ENCODE measurements at regions of chr10 and their contacts with region 1.

Region 1: DNA sequence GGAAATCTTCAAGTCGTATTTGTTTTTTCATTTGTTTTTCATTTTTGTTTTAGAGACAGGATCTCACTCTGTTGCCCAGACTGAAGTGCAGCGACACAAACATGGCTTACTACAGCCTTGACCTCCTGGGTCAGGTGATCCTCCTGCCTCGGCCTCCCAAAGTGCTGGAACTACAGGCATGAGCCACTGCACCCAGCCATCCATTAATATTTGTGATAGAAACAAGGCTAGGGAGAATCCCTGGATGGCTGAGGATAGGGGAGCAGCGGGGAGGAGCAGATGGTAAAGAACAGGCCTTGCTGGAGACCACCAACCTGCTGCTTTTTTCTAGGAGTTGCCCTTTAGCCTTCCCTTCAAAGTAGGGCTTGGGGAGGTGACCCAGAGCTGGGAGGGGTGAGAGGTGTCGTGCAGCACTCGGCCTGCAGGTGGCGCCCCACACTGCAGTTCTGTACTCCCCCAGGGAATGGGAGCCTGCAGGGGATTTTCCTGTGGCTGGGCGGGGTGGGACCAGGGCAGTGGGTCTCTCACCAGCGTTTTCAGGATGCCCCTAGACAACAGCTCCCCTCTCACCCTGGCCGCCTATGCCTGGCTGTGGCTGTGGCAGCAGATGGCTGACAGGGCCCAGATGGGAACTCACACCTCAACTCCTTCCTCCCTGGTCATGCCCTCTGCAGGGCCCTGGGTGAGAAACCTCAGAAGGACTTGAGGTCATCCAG is 12.6 kb upstream of the CDH23 start:
- DNase-seq: peak; percentile 58
- ATAC-seq: peak; percentile 80
- H3K4me3 ChIP-seq: no peak overlapping the region
- H3K27ac ChIP-seq: no peak overlapping the region
- H3K4me1 ChIP-seq: no peaks in the 10 kb centered on the region
- H3K27me3 ChIP-seq: peaks cover 11% of the 10 kb centered on the region; the same call in 1 of the 2 replicates
- CTCF ChIP-seq: peak; percentile 79

Region 2: GRCh38 chr10:71333129-71333887 is 50.8 kb before region 1 on chr10:
- CTCF ChIA-PET with region 1: no interaction called
- POLR2A ChIA-PET with region 1: no interaction called
- intact Hi-C with region 1: no loop called
- DNase-seq: no peak
- ATAC-seq: no peak
- H3K4me3 ChIP-seq: no peak overlapping the region
- H3K27ac ChIP-seq: no peak overlapping the region
- H3K4me1 ChIP-seq: no peaks in the 10 kb centered on the region
- H3K27me3 ChIP-seq: no peaks in the 10 kb centered on the region
- CTCF ChIP-seq: no peak

Region 3: GRCh38 chr10:71569775-71570588 is 185.9 kb after region 1 on chr10:
- CTCF ChIA-PET with region 1: no interaction called
- POLR2A ChIA-PET with region 1: no interaction called
- intact Hi-C with region 1: loop called (anchors 10 kb)
- DNase-seq: peak; percentile 69
- ATAC-seq: 0 out of 2 replicates have a peak, but pooled peaks have one; percentile 53
- H3K4me3 ChIP-seq: no peak overlapping the region
- H3K27ac ChIP-seq: no peak overlapping the region
- H3K4me1 ChIP-seq: no peaks in the 10 kb centered on the region
- H3K27me3 ChIP-seq: no peaks in the 10 kb centered on the region
- CTCF ChIP-seq: peak; percentile 78

Region 4: DNA sequence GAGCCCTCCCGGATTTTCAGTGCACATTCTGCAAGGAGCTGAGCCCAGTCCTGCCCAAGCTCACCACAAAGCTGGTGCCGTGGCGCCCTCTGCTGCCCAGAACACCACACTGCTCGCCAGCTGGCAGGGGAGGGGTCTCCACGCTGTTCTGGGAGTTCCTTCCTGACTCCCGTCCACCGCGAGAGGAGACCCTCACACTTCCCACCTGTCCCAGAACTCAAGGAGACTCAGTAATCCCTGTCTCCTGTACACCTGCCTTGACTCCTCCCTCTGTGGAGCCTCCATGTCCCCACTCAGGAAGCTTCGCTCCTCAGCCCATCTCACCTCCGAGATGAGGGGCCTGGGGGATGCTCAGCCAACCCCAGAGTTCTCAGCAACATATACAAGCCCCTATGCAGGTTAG is 324.2 kb after region 1 on chr10:
- CTCF ChIA-PET with region 1: no interaction called
- POLR2A ChIA-PET with region 1: no interaction called
- intact Hi-C with region 1: loop called (anchors 10 kb)
- DNase-seq: peak; percentile 44
- ATAC-seq: peak; percentile 75
- H3K4me3 ChIP-seq: no peak overlapping the region
- H3K27ac ChIP-seq: no peak overlapping the region
- H3K4me1 ChIP-seq: no peaks in the 10 kb centered on the region
- H3K27me3 ChIP-seq: no peaks in the 10 kb centered on the region
- CTCF ChIP-seq: peak; percentile 78